Naive thymus-derived CD4-positive, alpha-beta T cell (primary cell): ENCODE measurements at regions of chrX and their contacts with region 1.

Region 1: DNA sequence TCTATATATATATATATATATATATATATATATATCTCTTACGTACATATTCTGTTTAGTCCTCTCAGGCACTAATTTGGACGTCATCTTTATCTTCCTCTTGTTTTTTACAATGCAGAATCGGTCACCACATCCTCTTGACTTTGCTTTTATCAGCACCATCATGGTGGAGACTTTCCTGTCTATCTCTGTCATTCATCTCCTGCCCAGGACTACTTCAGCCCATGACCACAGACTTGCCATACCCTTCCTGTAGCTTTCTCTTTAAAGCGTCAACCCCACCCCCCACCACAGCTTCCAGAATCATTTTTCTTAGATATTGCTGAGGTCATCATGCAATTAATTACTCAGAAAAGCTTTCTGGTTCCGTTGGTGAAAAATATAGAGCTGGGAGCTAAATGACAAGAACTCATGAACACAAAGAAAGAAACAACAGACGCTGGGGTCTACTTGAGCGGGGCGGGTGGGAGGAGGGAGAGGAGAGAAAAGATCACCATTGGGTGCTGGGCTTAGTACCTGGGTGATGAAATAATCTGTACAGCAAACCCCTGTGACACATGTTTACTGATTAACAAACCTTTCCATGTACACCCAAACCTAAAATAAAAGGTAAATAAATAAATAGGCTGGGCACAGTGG is 30.5 kb upstream of the PRKX start:
- DNase-seq: peak in 7 of 9 donors; percentile 34 to 80 (median 50)
- ATAC-seq: peak; percentile 96
- H3K4me3 ChIP-seq: no peak overlapping the region
- H3K4me3 Mint-ChIP-seq: peak overlapping the region; percentile 27 to 80 (median 72)
- H3K27ac ChIP-seq: no peak overlapping the region
- H3K27ac Mint-ChIP-seq: peak overlapping the region in 8 of 9 donors; percentile 0 to 86 (median 73)
- H3K4me1 ChIP-seq: peaks cover 10 to 23% of the 10 kb centered on the region in 2 donors
- H3K4me1 Mint-ChIP-seq: peaks cover 17 to 51% (median 38%) of the 10 kb centered on the region in 7 donors
- H3K27me3 ChIP-seq: no peaks in the 10 kb centered on the region
- H3K27me3 Mint-ChIP-seq: no peaks in the 10 kb centered on the region

Region 2: DNA sequence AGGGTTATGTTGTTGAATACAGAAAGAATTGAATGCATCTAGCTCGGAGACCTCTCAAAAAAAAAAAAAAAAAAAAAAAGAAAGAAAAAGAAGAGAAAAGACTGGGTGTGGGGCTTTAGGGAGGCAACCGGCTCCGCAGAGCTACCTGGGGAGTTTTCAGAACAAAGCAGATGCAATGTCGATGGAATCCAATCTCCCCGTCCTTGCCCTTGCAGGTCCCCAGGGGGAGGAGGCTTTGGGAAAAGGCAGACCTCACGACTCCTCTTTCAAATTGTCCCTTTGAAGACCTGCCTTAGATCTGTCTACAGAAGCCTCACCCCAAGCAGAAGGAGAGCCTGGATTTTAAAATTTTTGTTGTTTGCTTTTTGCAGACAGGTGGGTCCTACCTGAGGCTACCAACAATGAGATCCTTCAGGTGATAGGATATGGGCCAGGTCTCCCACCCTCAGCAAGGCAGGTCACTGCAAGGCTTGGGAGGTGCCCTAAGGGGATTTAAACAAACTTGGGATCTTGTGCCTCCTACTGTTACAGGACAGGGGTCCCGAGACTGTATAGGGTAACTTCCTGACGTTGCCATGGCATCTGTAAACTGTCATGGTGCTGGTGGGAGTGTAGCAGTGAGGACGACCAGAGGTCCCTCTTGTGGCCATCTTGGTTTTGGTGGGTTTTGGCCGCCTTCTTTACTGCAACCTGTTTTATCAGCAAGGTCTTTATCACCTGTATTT is 44.8 kb after region 1 on chrX:
- CTCF ChIA-PET with region 1: no interaction called
- POLR2A ChIA-PET with region 1: no interaction called
- intact Hi-C with region 1: loop called in 1 of 2 experiments (anchors 5 kb)
- DNase-seq: peak in 4 of 9 donors; percentile 3 to 21 (median 12)
- ATAC-seq: no peak
- H3K4me3 ChIP-seq: no peak overlapping the region
- H3K4me3 Mint-ChIP-seq: peak overlapping the region in 2 of 10 donors; percentile 8 to 22
- H3K27ac ChIP-seq: no peak overlapping the region
- H3K27ac Mint-ChIP-seq: peak overlapping the region in 1 of 9 donors; percentile 36
- H3K4me1 ChIP-seq: no peaks in the 10 kb centered on the region
- H3K4me1 Mint-ChIP-seq: peaks cover 0 to 16% (median 6%) of the 10 kb centered on the region in 7 donors
- H3K27me3 ChIP-seq: no peaks in the 10 kb centered on the region
- H3K27me3 Mint-ChIP-seq: peaks cover 0 to 20% (median 3%) of the 10 kb centered on the region in 5 donors

Region 3: DNA sequence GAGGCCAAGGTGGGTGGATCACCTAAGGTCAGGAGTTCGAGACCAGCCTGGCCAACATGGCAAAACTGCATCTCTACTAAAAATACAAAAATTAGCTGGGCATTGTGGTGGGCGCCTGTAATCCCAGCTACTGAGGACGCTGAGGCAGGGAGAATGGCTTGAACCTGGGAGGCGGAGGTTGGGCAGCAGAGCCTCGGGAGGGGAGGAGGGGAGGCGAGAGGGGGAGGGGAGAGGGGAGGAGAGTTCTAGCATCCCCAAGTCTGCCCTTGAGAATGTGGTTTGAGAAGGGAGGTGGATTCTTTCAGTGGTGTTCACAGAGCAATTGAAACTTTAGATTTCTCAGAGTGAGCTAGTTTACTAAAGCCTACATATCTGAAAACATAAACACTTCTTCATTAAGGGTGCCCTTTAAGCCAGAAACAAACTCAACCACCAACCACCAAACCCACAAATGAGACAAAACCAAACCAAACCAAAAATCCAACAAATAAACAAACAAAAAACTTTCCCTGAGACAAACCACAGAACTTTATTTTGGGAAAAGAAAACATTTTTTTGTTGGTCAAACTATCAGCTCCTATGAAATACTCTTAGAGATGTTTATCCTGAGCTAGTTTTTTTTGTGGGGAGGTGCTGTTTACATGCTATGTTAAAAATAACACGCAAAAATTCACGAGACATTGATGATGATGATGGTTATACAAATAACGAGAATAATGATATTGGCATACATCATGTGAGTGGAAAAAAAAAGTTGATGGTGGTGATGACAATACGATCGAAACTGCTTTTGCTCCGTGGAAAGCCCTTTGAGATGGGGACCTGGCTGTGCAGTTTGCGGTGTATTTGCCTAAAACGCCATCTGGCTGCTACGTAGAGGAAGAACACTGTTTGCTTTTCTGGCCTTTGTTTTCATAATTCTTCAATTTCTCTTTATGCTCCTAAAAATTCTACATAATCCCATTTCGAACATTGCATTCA is 67.7 kb after region 1 on chrX:
- CTCF ChIA-PET with region 1: interaction called, 5 read pairs
- POLR2A ChIA-PET with region 1: no interaction called
- intact Hi-C with region 1: loop called in 1 of 2 experiments (anchors 1 kb)
- DNase-seq: peak in 7 of 9 donors; percentile 35 to 71 (median 59)
- ATAC-seq: no peak
- H3K4me3 ChIP-seq: peak overlapping the region; percentile 34
- H3K4me3 Mint-ChIP-seq: peak overlapping the region in 9 of 10 donors; percentile 35 to 83 (median 57)
- H3K27ac ChIP-seq: no peak overlapping the region
- H3K27ac Mint-ChIP-seq: peak overlapping the region in 5 of 9 donors; percentile 4 to 79 (median 71)
- H3K4me1 ChIP-seq: no peaks in the 10 kb centered on the region
- H3K4me1 Mint-ChIP-seq: peaks cover 0 to 30% (median 9%) of the 10 kb centered on the region in 7 donors
- H3K27me3 ChIP-seq: no peaks in the 10 kb centered on the region
- H3K27me3 Mint-ChIP-seq: peaks cover 5 to 29% (median 10%) of the 10 kb centered on the region in 5 donors